ENCODE measurements at regions of chr17 and their contacts with region 1.

Region 1: DNA sequence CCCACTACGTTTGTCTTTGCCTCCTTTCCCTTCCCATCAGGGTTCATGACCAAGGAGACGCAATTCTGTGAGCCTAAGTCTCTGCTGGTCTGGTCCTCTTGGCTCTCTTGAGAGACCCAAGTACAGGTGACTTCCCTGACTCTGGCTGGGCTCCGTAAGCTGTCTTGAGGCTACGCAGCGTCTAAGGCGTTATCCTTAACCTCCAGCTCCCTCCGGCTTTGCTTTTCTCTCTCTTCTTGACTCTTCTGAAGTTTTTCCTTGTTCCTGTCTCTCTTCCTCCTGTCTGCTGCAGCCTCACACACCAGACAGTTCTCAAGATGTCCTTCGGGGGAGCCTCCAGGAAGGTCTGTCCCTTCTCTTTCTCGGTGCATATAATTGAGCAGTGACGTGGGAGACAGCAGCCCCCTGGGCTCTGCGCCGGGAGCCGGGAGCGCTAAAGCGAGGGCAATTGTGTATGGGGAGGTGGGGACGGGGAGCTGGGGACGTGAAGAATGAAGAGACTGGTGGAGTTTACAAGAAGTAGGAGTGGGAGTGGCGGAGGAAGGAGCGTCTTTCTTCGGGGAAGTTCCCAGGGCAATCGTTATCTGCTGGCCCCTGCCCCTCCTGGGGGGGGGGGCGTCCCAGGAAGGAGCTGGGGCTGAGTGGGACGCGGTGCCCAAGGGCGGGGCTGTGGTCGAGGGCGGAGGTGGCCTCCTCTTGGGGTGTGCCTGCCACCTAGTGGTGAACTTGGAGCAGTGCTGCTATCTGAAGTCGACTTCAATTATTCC is 6.9 kb upstream of the PIRT start:
- DNase-seq: peak; percentile 77
- H3K4me3 ChIP-seq: peak overlapping the region; percentile 77
- H3K27ac ChIP-seq: no peak overlapping the region
- H3K4me1 ChIP-seq: no peaks in the 10 kb centered on the region
- H3K27me3 ChIP-seq: no peaks in the 10 kb centered on the region; the same call in 1 of the 2 replicates

Region 2: GRCh38 chr17:10646392-10646990 is 198.3 kb before region 1 on chr17:
- in situ Hi-C with region 1: loop called (anchors 10 kb)
- DNase-seq: peak; percentile 78
- H3K4me3 ChIP-seq: no peak overlapping the region
- H3K27ac ChIP-seq: no peak overlapping the region
- H3K4me1 ChIP-seq: no peaks in the 10 kb centered on the region
- H3K27me3 ChIP-seq: no peaks in the 10 kb centered on the region

Region 3: GRCh38 chr17:10737168-10737622 is 107.6 kb before region 1 on chr17:
- in situ Hi-C with region 1: loop called (anchors 5 kb)
- DNase-seq: peak; percentile 83
- H3K4me3 ChIP-seq: no peak overlapping the region
- H3K27ac ChIP-seq: no peak overlapping the region
- H3K4me1 ChIP-seq: no peaks in the 10 kb centered on the region
- H3K27me3 ChIP-seq: no peaks in the 10 kb centered on the region; the same call in 1 of the 2 replicates

Measured in GM23248 (cell line).